ENCODE measurements at regions of chr12 and their contacts with region 1.

Region 1: GRCh38 chr12:112998987-112999767 is 20.9 kb downstream of the OAS2 start:
- DNase-seq: no peak
- ATAC-seq: no peak
- H3K4me3 ChIP-seq: no peak overlapping the region
- H3K27ac ChIP-seq: no peak overlapping the region
- H3K4me1 ChIP-seq: peaks cover 12% of the 10 kb centered on the region
- H3K27me3 ChIP-seq: peaks cover 1 to 8% of the 10 kb centered on the region in 2 experiments; a peak in 1 of 5 replicates
- CTCF ChIP-seq: no peak
- EP300 ChIP-seq: no peak
- POLR2A ChIP-seq: no peak
- RAD21 ChIP-seq: no peak

Region 2: DNA sequence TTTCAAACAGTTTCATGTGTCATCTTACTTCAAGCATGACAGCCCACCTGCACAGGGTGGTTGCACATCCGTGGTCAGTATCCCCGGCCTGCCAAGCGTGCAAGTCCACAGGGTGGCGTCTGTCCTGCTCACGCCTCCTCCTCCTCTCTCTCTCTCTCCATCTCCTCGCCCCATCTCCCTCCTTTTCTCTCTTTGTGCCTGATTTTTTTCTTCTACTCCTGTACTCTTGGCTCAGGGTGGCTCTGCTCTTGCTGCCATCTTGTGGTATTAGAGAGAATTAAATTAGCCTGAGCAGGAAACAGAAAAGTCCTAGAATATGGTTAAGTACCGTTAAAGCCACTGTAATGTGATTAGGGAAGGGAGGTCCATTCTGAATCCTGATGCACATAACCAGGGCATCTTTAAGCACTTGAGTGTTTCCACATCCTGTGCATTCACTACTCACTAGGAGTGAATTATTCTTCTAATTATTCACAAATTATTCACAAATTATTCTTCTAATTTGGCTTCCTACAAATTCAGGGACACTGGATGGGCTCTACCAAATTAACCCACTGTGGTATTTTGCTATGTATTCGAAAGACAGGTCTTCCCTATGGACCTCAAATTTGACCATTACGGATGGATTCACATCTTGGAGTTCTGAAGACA is 31.8 kb after region 1 on chr12:
- CTCF ChIA-PET with region 1: interaction called, 44 read pairs
- POLR2A ChIA-PET with region 1: no interaction called
- in situ Hi-C with region 1: loop called (anchors 5 kb)
- intact Hi-C with region 1: no loop called
- DNase-seq: peak; percentile 45
- ATAC-seq: peak; percentile 79
- H3K4me3 ChIP-seq: no peak overlapping the region
- H3K27ac ChIP-seq: no peak overlapping the region
- H3K4me1 ChIP-seq: no peaks in the 10 kb centered on the region
- H3K27me3 ChIP-seq: 0 out of 5 replicates have a peak, but pooled peaks cover 0 to 3% of the 10 kb centered on the region in 2 experiments
- CTCF ChIP-seq: peak; percentile 69
- EP300 ChIP-seq: no peak
- POLR2A ChIP-seq: no peak
- RAD21 ChIP-seq: no peak